ENCODE measurements at regions of chr22 and their contacts with region 1.

Region 1: DNA sequence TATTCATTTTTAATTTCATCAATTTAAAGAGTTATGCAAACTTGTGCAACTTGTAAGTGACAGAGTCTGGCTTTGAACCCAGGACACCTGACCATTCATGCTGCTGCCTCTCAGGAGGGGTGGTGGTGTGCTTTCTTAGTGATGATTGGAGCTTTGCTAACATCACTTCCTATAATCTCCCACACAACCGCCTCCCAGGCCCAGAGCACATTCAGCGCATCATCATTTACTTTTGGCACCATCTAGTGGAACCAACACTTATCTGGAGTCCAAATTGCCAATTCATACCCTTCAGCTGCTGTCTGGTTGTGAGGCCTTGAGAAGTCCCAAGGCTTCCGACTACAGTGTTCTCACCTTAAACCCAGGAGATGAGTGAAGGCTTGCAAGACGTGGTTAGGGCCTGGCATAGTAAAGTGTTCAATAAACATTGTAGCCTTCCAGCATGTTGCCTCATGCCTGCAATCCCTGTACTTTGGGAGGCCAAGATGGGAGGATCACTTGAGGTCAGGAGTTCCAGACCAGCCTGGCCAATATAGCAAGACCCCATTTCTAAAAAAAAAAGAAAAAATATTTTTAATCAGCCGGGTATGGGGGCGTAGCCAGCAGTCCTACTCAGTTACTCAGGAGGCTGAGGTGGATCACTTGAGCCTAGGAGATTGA is 1.1 kb upstream of the TTLL1 start:
- DNase-seq: peak; percentile 93
- H3K4me3 ChIP-seq: no peak overlapping the region
- H3K27ac ChIP-seq: no peak overlapping the region
- H3K4me1 ChIP-seq: no peaks in the 10 kb centered on the region
- H3K27me3 ChIP-seq: no peaks in the 10 kb centered on the region
- CTCF ChIP-seq: peak; percentile 68

Region 2: GRCh38 chr22:42662114-42663021 is 427.9 kb before region 1 on chr22:
- CTCF ChIA-PET with region 1: no interaction called
- POLR2A ChIA-PET with region 1: no interaction called
- intact Hi-C with region 1: loop called (anchors 5 kb)
- DNase-seq: peak; percentile 87
- H3K4me3 ChIP-seq: peak overlapping the region; percentile 62
- H3K27ac ChIP-seq: peak overlapping the region; percentile 43
- H3K4me1 ChIP-seq: no peaks in the 10 kb centered on the region
- H3K27me3 ChIP-seq: no peaks in the 10 kb centered on the region
- CTCF ChIP-seq: peak; percentile 91

Region 3: DNA sequence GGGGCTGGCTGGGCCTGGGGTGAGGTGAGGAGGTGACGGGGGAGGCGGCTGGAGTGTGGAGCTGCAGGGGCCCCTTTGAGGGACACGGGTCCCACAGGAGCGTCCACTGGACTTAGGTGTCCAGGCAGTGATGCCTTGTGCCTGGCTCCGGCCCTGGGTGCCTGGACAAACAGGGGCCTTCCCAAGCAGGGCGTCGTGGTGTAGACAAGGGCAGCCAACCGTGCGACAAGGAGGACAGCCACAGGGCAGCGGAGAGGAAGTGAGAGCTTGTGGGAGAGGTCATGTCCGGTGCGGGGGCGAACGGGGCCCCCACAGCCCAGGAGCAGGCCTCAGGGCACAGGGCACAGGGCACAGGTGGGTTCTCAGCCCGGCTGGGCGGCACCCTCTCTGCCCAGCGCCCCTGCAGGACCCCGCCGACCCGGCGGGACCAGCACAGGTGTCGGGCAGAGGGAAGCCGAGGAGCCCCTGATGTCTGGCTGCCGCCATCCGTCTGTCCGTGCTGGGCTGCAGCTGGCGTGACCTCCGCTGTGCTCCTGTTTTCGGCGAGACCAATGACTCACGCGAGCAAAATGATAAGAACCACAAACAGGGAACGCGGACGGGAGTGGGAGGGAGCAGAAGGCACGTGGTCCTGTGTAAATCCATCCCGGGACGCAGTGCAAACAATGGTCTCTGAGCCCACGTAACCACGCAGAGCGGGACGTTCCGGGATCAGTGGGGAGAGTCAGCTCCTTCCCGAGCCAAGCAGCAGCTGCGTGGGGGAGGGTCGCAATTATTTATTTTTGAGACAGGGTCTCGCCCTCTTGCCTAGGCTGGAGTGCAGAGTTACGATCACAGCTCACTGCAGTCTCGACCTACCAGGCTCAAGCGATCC is 320.4 kb before region 1 on chr22:
- CTCF ChIA-PET with region 1: interaction called, 11 read pairs
- POLR2A ChIA-PET with region 1: no interaction called
- intact Hi-C with region 1: no loop called
- DNase-seq: no peak
- H3K4me3 ChIP-seq: no peak overlapping the region
- H3K27ac ChIP-seq: no peak overlapping the region
- H3K4me1 ChIP-seq: no peaks in the 10 kb centered on the region
- H3K27me3 ChIP-seq: no peaks in the 10 kb centered on the region
- CTCF ChIP-seq: no peak

Region 4: DNA sequence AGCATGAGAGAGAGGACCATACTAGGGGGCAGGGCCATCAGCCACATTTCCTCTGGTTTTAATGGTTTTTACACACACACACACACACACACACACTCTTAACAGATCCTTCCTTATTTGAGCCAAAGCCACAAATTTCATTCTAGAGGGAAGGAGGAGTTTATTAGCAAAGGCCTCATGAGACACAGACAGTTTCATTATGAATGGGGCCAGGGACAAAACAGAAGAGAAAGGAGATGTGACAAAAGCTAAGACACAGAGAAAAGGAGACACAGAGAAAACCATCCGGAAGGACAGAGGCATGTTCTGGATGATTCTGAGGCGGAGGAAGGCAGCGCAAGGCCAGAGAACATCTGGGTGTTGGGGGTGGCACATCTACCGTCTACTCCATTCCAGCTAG is 201.0 kb before region 1 on chr22:
- CTCF ChIA-PET with region 1: interaction called, 10 read pairs
- POLR2A ChIA-PET with region 1: no interaction called
- intact Hi-C with region 1: no loop called
- DNase-seq: no peak
- H3K4me3 ChIP-seq: no peak overlapping the region
- H3K27ac ChIP-seq: no peak overlapping the region
- H3K4me1 ChIP-seq: no peaks in the 10 kb centered on the region
- H3K27me3 ChIP-seq: no peaks in the 10 kb centered on the region
- CTCF ChIP-seq: no peak